ENCODE measurements at regions of chr6 and their contacts with region 1.

Region 1: DNA sequence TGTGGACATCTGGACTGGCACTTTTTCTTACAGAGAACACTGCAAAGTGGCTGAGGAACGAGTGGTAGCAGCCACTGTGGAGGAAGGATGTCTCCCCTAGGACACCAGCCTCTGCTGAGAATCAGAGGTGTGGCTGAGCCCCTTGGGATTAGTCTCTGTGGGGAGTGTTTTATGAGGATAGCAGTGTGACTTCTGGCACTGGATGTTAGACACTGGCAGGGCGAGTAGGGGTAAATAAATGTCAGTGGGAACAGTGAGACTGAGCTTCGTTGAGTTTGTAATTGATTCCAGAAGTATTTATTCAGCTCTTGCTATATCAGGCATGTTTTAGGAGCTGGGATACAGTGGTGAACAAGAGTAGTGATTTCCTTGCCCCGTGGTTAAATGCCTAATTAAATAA is 124.0 kb downstream of the JARID2 start:
- DNase-seq: no peak
- H3K4me3 ChIP-seq: no peak overlapping the region
- H3K27ac ChIP-seq: no peak overlapping the region
- H3K4me1 ChIP-seq: peaks cover 11% of the 10 kb centered on the region
- H3K27me3 ChIP-seq: no peaks in the 10 kb centered on the region
- CTCF ChIP-seq: no peak
- EP300 ChIP-seq: no peak
- POLR2A ChIP-seq: no peak

Region 2: GRCh38 chr6:14964515-14965270 is 405.1 kb before region 1 on chr6:
- intact Hi-C with region 1: no loop called
- DNase-seq: no peak
- H3K4me3 ChIP-seq: no peak overlapping the region
- H3K27ac ChIP-seq: no peak overlapping the region
- H3K4me1 ChIP-seq: no peaks in the 10 kb centered on the region
- H3K27me3 ChIP-seq: no peaks in the 10 kb centered on the region
- CTCF ChIP-seq: no peak
- EP300 ChIP-seq: no peak
- POLR2A ChIP-seq: no peak

Region 3: GRCh38 chr6:15312500-15312899 is 57.3 kb before region 1 on chr6:
- intact Hi-C with region 1: loop called in 1 of 4 experiments (anchors 10 kb)
- DNase-seq: no peak
- H3K4me3 ChIP-seq: no peak overlapping the region
- H3K27ac ChIP-seq: peak overlapping the region in 1 of 2 donors; percentile 4
- H3K4me1 ChIP-seq: peaks cover 4% of the 10 kb centered on the region
- H3K27me3 ChIP-seq: no peaks in the 10 kb centered on the region
- CTCF ChIP-seq: no peak
- EP300 ChIP-seq: no peak
- POLR2A ChIP-seq: no peak

Measured in ovary (tissue), 10 donors.